CD14-positive monocyte (primary cell): ENCODE measurements at regions of chr3 and their contacts with region 1.

Region 1: DNA sequence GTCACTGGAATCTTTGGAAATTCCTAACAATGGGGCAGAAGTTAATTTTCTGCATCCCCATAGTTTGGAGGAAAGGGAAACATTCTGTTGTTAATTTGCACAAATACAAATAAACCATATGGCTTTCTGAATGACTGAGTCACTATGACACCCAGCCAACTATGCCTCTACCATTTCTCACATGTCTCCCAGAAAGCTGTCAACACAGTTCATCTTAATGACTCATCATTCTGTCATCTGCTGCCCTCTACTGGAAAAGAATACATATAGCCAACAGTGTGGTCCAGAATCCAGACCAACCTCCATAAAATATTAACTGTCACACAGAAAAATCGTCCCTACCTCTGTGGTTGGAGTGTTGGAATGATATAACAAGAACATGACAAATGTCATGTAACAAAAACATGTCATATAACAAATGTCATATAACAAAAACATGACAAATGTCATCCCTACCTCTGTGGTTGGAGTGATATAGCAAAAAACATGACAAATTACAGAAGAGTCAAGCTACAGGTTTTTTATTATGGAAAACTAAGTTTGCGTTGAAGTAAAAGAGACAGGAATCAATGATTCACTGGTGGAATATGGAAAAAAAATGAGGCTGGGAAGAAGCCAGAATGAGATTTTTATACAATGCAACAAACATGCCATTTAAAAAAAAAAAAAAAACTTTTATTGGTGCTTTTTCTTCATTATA is 47.7 kb upstream of the GYG1 start:
- DNase-seq: peak; percentile 70 to 85 (median 83)
- H3K4me3 ChIP-seq: no peak overlapping the region
- H3K4me3 Mint-ChIP-seq: no peak overlapping the region
- H3K27ac ChIP-seq: no peak overlapping the region
- H3K27ac Mint-ChIP-seq: no peak overlapping the region
- H3K4me1 ChIP-seq: no peaks in the 10 kb centered on the region
- H3K4me1 Mint-ChIP-seq: peaks cover 2% of the 10 kb centered on the region
- H3K27me3 ChIP-seq: no peaks in the 10 kb centered on the region
- H3K27me3 Mint-ChIP-seq: peaks cover 0 to 3% (median 0%) of the 10 kb centered on the region in 3 donors
- CTCF ChIP-seq: peak; percentile 80

Region 2: GRCh38 chr3:148737104-148737530 is 206.5 kb before region 1 on chr3:
- intact Hi-C with region 1: loop called in 1 of 2 experiments (anchors 10 kb)
- DNase-seq: no peak
- H3K4me3 ChIP-seq: no peak overlapping the region
- H3K4me3 Mint-ChIP-seq: no peak overlapping the region
- H3K27ac ChIP-seq: no peak overlapping the region
- H3K27ac Mint-ChIP-seq: no peak overlapping the region
- H3K4me1 ChIP-seq: peaks cover 18 to 28% of the 10 kb centered on the region in 2 donors
- H3K4me1 Mint-ChIP-seq: peaks cover 33% of the 10 kb centered on the region
- H3K27me3 ChIP-seq: no peaks in the 10 kb centered on the region
- H3K27me3 Mint-ChIP-seq: no peaks in the 10 kb centered on the region
- CTCF ChIP-seq: no peak

Region 3: DNA sequence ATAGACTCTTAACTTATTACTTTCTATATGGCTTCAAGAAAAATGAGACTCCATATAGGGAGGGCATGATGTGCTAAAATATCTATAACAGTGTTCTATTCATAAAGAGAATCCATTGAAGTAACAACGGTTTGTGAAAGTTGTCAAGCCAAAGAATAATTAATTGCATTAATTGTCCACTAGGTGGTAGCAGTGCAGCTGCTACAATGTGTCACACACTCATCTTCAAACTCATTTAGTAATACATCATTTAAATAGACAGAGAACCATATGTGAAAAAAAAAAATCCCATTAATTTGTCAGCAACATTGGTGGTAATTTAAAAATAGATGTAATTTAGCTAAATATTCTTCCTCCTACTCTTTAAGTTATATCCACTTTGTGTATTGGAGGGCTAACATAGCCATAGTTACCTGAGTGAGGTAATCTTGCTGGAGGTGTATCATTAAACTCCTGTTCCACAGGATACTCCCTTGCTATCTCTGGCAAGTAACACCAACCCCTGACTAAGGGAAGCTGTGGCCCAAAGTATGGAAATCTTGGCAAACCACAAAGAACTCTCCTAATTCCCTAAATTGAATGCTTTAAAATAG is 82.3 kb before region 1 on chr3:
- intact Hi-C with region 1: loop called (anchors 5 kb)
- DNase-seq: peak; percentile 18 to 59 (median 31)
- H3K4me3 ChIP-seq: no peak overlapping the region
- H3K4me3 Mint-ChIP-seq: no peak overlapping the region
- H3K27ac ChIP-seq: no peak overlapping the region
- H3K27ac Mint-ChIP-seq: no peak overlapping the region
- H3K4me1 ChIP-seq: no peaks in the 10 kb centered on the region
- H3K4me1 Mint-ChIP-seq: no peaks in the 10 kb centered on the region
- H3K27me3 ChIP-seq: no peaks in the 10 kb centered on the region
- H3K27me3 Mint-ChIP-seq: no peaks in the 10 kb centered on the region
- CTCF ChIP-seq: peak; percentile 88